Calu3 (cell line): ENCODE measurements at regions of chr21 and their contacts with region 1.

Region 1: DNA sequence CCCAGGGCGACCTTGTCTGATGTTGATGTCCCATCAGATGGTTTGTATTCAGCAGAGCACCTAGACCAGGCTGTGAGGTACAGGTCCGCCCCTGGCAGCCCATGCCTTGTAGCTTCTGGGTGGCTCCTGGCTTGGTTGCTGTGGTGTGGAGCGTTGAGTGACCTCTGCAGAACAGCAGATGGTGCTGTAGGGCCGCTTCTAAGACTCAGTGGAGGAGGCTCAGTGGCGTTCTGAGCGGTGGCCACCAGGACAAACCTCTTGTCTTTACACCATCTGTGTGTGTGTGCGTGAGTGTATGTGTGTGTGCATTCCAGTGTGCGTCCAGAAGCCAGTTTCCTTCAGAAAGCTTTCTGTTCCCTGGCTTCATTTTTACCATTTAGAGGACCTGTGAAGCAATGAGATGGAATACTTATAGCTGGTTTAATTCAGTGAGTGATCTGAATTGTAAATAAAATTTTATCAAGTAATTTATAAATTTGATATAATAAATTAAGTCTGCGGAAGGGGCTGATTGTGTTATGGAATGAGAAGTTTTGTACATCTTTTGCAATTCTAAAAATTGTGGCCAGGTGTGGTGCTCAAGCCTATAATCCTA is 66.1 kb downstream of the ADARB1 start:
- DNase-seq: peak; percentile 74
- H3K4me3 Mint-ChIP-seq: no peak overlapping the region
- H3K27ac Mint-ChIP-seq: no peak overlapping the region
- H3K4me1 Mint-ChIP-seq: no peaks in the 10 kb centered on the region
- H3K27me3 Mint-ChIP-seq: peaks cover 18% of the 10 kb centered on the region
- CTCF ChIP-seq: peak; percentile 55

Region 2: DNA sequence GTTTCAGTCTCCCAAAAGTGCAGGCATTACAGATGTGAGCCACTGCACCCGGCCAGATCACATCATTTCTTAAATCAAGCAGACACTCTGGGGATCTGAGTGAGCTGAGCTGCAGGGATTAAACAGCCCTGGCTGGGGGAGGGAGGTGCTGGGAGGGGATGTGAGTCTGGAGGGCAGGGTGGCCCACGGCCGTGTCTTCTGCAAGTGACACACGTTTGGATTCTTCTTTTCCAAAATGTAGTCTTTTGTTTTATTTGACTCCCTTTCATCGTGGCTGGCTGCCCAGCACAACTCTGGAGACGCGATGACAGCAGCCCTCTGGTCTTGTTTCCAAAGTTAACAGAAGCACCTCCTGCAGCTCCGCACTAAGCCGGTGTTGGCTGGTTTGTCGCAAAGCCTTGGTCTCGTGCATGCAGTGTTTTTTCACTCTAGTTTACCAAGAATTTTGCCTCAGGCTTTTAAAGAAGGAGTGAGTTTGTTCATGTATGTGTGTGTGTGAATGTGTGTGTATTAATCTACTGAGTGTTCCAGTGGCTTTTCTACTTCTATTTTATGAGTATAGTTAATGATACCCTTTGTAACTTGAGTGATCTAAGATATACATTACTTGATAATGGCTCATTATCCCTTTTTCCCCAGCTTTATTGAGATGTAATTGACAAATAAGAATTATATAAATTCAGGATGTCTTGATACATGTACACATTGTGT is 557.2 kb before region 1 on chr21:
- CTCF ChIA-PET with region 1: no interaction called
- intact Hi-C with region 1: no loop called
- DNase-seq: no peak
- H3K4me3 Mint-ChIP-seq: no peak overlapping the region
- H3K27ac Mint-ChIP-seq: no peak overlapping the region
- H3K4me1 Mint-ChIP-seq: peaks cover 8% of the 10 kb centered on the region
- H3K27me3 Mint-ChIP-seq: peaks cover 85% of the 10 kb centered on the region
- CTCF ChIP-seq: no peak

Region 3: GRCh38 chr21:45064618-45065399 is 75.6 kb before region 1 on chr21:
- CTCF ChIA-PET with region 1: no interaction called
- intact Hi-C with region 1: no loop called
- DNase-seq: no peak
- H3K4me3 Mint-ChIP-seq: no peak overlapping the region
- H3K27ac Mint-ChIP-seq: no peak overlapping the region
- H3K4me1 Mint-ChIP-seq: no peaks in the 10 kb centered on the region
- H3K27me3 Mint-ChIP-seq: peaks cover 32% of the 10 kb centered on the region
- CTCF ChIP-seq: no peak

Region 4: GRCh38 chr21:45179568-45180245 is 39.3 kb after region 1 on chr21:
- CTCF ChIA-PET with region 1: no interaction called
- intact Hi-C with region 1: no loop called
- DNase-seq: no peak
- H3K4me3 Mint-ChIP-seq: no peak overlapping the region
- H3K27ac Mint-ChIP-seq: no peak overlapping the region
- H3K4me1 Mint-ChIP-seq: no peaks in the 10 kb centered on the region
- H3K27me3 Mint-ChIP-seq: peaks cover 11% of the 10 kb centered on the region
- CTCF ChIP-seq: no peak

Region 5: GRCh38 chr21:45596704-45597318 is 456.4 kb after region 1 on chr21:
- CTCF ChIA-PET with region 1: interaction called, 6 read pairs
- intact Hi-C with region 1: loop called (anchors 5 kb)
- DNase-seq: peak; percentile 74
- H3K4me3 Mint-ChIP-seq: no peak overlapping the region
- H3K27ac Mint-ChIP-seq: no peak overlapping the region
- H3K4me1 Mint-ChIP-seq: no peaks in the 10 kb centered on the region
- H3K27me3 Mint-ChIP-seq: peaks cover 47% of the 10 kb centered on the region
- CTCF ChIP-seq: peak; percentile 69